B cell (primary cell): ENCODE measurements at regions of chr16 and their contacts with region 1.

Region 1: GRCh38 chr16:17416461-17417311 is 54.1 kb downstream of the XYLT1 start:
- DNase-seq: peak; percentile 90
- ATAC-seq: peak; percentile 91
- H3K4me3 ChIP-seq: peak overlapping the region; percentile 2 to 61 (median 40)
- H3K4me3 Mint-ChIP-seq: peak overlapping the region; percentile 85
- H3K27ac ChIP-seq: peak overlapping the region; percentile 76 to 81
- H3K27ac Mint-ChIP-seq: peak overlapping the region; percentile 90
- H3K4me1 ChIP-seq: peaks cover 61 to 68% of the 10 kb centered on the region in 2 donors
- H3K4me1 Mint-ChIP-seq: peaks cover 69% of the 10 kb centered on the region
- H3K27me3 ChIP-seq: no peaks in the 10 kb centered on the region
- H3K27me3 Mint-ChIP-seq: no peaks in the 10 kb centered on the region
- CTCF ChIP-seq: peak; percentile 68

Region 2: DNA sequence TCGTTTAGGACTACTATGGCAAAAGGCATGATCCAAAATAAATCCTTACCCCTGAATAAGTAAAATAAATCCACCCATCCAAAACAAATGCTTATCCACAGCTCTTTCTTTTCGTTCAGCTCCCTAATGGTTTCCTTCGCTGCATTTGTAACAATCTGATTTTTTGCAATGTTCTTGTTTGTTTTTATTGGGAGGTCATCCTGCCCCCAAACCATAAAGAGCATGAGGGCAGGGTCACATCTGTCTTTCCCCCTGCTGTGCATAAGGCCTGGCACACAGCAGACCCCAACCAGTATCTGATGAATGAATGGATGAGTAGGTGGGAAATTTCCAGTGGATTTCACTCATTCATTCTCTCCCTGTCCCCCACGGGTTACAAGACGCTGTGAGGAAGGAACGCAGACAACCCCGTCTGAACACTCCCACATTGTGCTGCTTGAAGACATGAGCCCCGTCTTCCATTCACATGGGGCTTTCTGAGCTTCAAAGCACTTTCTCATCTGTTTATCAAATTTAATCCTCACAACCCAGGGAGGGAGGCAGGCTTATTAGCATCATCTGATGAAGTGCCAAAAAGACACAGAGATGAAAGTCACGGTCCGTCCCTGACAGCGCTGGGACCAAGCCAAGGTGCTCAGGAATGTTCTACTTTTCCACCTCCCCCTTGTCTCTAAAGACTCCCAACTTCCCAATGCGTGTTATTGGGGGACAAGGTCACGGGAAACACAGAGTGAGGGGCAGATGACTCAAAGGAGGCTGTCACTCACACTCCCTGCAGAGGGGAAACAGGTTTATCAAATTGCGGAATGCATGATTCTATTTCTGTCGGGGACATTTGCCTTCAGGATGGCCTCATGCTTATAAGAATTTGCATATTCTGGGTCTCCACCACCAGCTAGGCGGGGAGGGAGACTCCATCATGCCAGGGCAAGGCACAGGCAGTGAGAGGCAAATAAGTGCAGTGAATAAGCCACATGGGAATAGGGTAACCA is 43.1 kb after region 1 on chr16:
- CTCF ChIA-PET with region 1: interaction called, 8 read pairs
- POLR2A ChIA-PET with region 1: no interaction called
- intact Hi-C with region 1: loop called (anchors 1 kb)
- DNase-seq: peak; percentile 73
- ATAC-seq: peak; percentile 81
- H3K4me3 ChIP-seq: peak overlapping the region in 1 of 5 experiments; percentile 19
- H3K4me3 Mint-ChIP-seq: peak overlapping the region; percentile 84
- H3K27ac ChIP-seq: peak overlapping the region in 1 of 2 donors; percentile 15
- H3K27ac Mint-ChIP-seq: peak overlapping the region; percentile 79
- H3K4me1 ChIP-seq: peaks cover 48 to 50% of the 10 kb centered on the region in 2 donors
- H3K4me1 Mint-ChIP-seq: peaks cover 56% of the 10 kb centered on the region
- H3K27me3 ChIP-seq: no peaks in the 10 kb centered on the region
- H3K27me3 Mint-ChIP-seq: no peaks in the 10 kb centered on the region
- CTCF ChIP-seq: no peak

Region 3: DNA sequence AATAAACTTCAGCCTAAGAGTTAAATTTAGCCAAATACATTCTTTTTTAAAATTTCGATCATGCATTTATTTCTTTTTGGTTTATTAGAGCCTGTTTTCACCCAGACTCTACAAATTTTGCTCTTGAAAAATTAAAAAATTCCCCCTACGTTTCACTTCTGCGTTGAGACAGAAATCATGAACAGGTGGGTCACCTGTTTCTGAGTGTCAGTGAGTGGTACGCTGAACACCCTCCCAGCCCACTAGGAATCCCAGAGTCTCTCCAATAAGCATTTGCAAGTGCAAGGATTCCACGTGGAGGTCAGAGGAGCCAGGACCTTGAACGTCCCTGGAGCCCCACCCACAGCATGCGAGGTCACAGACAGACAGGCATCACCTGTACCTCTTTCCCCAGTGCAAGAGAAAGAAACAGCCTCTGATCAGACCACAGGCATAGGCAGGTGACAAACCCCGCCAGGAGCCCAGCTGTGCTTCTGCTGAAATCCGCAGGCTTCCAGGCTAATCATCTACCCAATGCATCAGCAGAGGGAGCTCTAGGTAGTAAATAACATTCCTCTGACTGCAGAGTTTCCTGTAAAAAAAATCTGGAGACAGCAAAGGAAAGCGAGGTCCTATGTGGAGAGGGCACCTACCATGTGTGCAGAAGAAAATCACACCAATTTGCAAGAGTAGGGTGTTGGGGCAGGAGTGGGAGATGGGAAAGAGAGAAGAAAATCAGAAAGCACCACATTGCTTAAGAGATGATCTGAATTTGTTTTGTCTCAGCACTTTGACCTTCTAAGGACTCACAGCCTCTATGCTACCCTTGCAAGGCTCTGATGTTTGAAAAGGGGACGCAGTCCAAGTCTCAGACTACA is 60.0 kb after region 1 on chr16:
- CTCF ChIA-PET with region 1: interaction called, 14 read pairs
- POLR2A ChIA-PET with region 1: no interaction called
- intact Hi-C with region 1: loop called (anchors 2 kb)
- DNase-seq: peak; percentile 73
- ATAC-seq: peak; percentile 74
- H3K4me3 ChIP-seq: no peak overlapping the region
- H3K4me3 Mint-ChIP-seq: peak overlapping the region; percentile 54
- H3K27ac ChIP-seq: no peak overlapping the region
- H3K27ac Mint-ChIP-seq: no peak overlapping the region
- H3K4me1 ChIP-seq: peaks cover 27 to 31% of the 10 kb centered on the region in 2 donors
- H3K4me1 Mint-ChIP-seq: peaks cover 31% of the 10 kb centered on the region
- H3K27me3 ChIP-seq: peaks cover 0 to 5% (median 0%) of the 10 kb centered on the region in 4 experiments
- H3K27me3 Mint-ChIP-seq: peaks cover 18% of the 10 kb centered on the region
- CTCF ChIP-seq: peak; percentile 48

Region 4: GRCh38 chr16:17515421-17516210 is 98.9 kb after region 1 on chr16:
- CTCF ChIA-PET with region 1: no interaction called
- POLR2A ChIA-PET with region 1: no interaction called
- intact Hi-C with region 1: no loop called
- DNase-seq: no peak
- ATAC-seq: no peak
- H3K4me3 ChIP-seq: no peak overlapping the region
- H3K4me3 Mint-ChIP-seq: no peak overlapping the region
- H3K27ac ChIP-seq: no peak overlapping the region
- H3K27ac Mint-ChIP-seq: no peak overlapping the region
- H3K4me1 ChIP-seq: no peaks in the 10 kb centered on the region
- H3K4me1 Mint-ChIP-seq: no peaks in the 10 kb centered on the region
- H3K27me3 ChIP-seq: peaks cover 0 to 4% (median 0%) of the 10 kb centered on the region in 4 experiments
- H3K27me3 Mint-ChIP-seq: peaks cover 59% of the 10 kb centered on the region
- CTCF ChIP-seq: no peak